Dorsolateral prefrontal cortex (tissue), 120 donors: ENCODE measurements at regions of chr19 and their contacts with region 1.

Region 1: DNA sequence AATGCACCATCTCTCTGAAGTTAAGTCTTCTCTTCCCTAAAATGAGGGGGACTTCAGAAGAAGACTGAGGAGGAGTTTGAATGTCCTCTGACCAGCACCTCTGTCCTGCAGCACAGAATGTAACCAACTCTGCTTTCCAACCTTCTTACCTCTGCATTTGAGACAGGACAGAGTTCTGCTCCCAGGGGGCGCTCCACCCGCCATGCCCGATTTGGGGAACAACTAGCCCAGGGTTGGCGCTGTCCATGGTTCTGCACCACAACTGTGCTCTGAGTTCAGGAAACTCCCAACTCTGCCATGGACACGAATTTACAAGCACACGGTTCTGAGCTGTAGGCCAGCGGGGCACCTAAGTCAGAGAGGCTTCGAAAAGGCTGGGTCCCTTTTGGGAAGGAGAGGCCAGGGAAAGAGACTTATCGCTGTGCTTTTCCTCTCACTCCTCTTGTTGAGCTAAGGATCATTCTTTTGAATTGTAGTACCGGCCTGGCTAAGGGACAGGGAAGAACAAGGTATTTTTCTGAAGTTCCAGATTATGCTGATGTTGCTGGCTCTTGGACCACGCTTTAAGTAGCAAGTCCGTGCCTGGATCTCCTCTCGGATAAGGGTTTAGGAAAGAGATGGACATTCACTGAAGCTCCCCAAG is 22.2 kb downstream of the SIGLEC5 start:
- DNase-seq: peak in 6 of 10 donors; percentile 37 to 56 (median 48)
- H3K4me3 ChIP-seq: no peak overlapping the region
- H3K27ac ChIP-seq: no peak overlapping the region
- H3K27me3 ChIP-seq: no peaks in the 10 kb centered on the region
- CTCF ChIP-seq: peak in 54 of 56 donors; percentile 19 to 73 (median 48)

Region 2: GRCh38 chr19:51651216-51651846 is 43.3 kb after region 1 on chr19:
- intact Hi-C with region 1: loop called in 1 of 2 experiments (anchors 5 kb)
- DNase-seq: no peak
- H3K4me3 ChIP-seq: no peak overlapping the region
- H3K27ac ChIP-seq: peak overlapping the region in 1 of 59 donors; percentile 6
- H3K27me3 ChIP-seq: peaks cover 0 to 7% (median 0%) of the 10 kb centered on the region in 45 donors
- CTCF ChIP-seq: no peak